ENCODE measurements at regions of chr7 and their contacts with region 1.

Region 1: GRCh38 chr7:8084836-8085235 is 116.2 kb downstream of the GLCCI1 start:
- DNase-seq: no peak
- H3K4me3 ChIP-seq: no peak overlapping the region
- H3K27ac ChIP-seq: no peak overlapping the region
- H3K4me1 ChIP-seq: no peaks in the 10 kb centered on the region
- H3K27me3 ChIP-seq: no peaks in the 10 kb centered on the region
- CTCF ChIP-seq: no peak

Region 2: DNA sequence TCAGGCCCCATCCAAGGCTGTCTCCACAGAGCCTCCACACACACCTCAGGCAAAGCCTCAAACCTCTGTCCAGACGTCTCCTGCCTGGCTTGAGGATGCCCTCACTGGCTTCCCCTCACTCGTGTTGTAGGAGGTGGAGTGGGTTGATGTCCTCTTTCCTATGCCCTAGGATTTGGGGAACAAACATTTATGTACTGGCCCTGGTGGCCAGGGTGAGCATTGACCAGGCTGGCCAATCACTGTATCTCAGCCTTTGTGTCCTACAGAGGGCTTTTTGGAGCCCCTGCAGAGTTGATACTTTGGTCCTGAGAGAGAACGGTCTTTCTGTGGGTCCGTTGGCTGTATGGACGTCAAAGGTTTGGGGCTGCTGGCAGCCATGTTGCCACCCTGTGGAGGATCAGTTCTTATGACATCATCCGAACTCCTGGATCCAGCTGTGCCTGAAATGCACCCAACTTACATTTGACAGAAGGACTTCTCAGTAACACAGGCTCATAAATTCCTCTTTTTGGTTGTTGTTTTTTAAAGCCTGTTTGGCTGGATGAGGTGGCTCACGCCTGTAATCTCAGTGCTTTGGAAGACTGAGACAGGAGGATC is 1531.3 kb before region 1 on chr7:
- CTCF ChIA-PET with region 1: interaction called, 13 read pairs
- POLR2A ChIA-PET with region 1: no interaction called
- intact Hi-C with region 1: no loop called
- DNase-seq: no peak
- H3K4me3 ChIP-seq: no peak overlapping the region
- H3K27ac ChIP-seq: no peak overlapping the region
- H3K4me1 ChIP-seq: no peaks in the 10 kb centered on the region
- H3K27me3 ChIP-seq: no peaks in the 10 kb centered on the region
- CTCF ChIP-seq: peak; percentile 46

Measured in PC-9 (cell line).